ENCODE measurements at regions of chr1 and their contacts with region 1.

Region 1: GRCh38 chr1:235923466-235924021 is 56.8 kb upstream of the LYST start:
- H3K4me3 Mint-ChIP-seq: no peak overlapping the region
- H3K27ac Mint-ChIP-seq: no peak overlapping the region
- H3K4me1 Mint-ChIP-seq: peaks cover 51% of the 10 kb centered on the region
- H3K27me3 Mint-ChIP-seq: no peaks in the 10 kb centered on the region

Region 2: DNA sequence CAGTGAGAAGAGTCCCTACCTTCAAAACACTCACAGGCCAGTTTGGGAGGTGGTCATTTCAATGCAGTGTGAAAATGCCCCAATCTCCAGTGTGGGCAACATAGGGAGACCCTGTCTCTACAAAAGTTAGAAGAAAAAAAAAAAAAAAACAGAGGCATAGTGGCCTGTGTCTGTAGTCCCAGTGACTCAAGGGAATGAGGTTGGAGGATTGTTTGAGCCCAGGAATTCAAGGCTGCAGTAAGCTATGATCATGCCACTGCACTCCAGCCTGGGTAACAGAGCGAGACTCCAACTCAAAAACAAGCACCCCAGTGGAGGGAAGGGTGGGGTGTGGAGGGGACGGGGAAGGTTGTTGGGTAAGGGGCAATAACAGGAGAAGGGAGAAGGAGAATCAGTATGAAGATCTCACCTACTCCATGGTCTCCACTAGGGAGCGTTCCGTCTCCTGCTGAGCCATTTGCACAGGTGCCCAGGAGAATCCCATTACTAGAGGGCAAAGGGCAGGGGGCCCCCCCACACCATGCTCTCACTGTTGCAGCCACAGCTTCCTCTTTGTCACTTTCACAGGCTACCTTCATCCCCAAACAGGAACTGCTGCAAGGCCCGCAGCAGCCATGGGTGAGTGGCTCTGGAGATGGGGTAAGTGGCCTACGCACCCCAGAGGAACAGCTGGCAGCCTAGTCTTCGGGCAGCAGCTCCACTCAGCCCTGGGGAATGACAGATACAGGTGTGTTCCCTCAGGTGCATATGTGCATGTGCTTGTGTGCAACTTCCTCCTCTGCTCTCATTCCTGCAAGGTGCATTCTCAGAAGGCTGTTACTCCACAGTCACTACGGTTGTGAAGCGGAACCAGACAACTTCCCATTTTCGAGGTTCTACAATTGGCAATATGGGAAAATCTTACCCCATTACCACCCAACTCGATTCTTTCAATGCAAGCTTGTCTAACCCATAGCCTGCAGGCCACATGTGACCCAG is 31.1 kb after region 1 on chr1:
- intact Hi-C with region 1: loop called (anchors 5 kb)
- H3K4me3 Mint-ChIP-seq: no peak overlapping the region
- H3K27ac Mint-ChIP-seq: peak overlapping the region; percentile 67
- H3K4me1 Mint-ChIP-seq: peaks cover 69% of the 10 kb centered on the region
- H3K27me3 Mint-ChIP-seq: peaks cover 2% of the 10 kb centered on the region